Caco-2 (cell line): ENCODE measurements at regions of chr4 and their contacts with region 1.

Region 1: GRCh38 chr4:87120411-87121199 is 99.8 kb downstream of the KLHL8 start:
- DNase-seq: peak; percentile 51 to 63
- H3K4me3 ChIP-seq: no peak overlapping the region
- H3K4me3 Mint-ChIP-seq: peak overlapping the region; percentile 44
- H3K27ac Mint-ChIP-seq: peak overlapping the region; percentile 71
- H3K4me1 ChIP-seq: peaks cover 53% of the 10 kb centered on the region
- H3K4me1 Mint-ChIP-seq: peaks cover 27% of the 10 kb centered on the region
- H3K27me3 ChIP-seq: no peaks in the 10 kb centered on the region
- H3K27me3 Mint-ChIP-seq: no peaks in the 10 kb centered on the region
- CTCF ChIP-seq: no peak

Region 2: GRCh38 chr4:87108142-87108546 is 12.5 kb before region 1 on chr4:
- CTCF ChIA-PET with region 1: no interaction called
- POLR2A ChIA-PET with region 1: interaction called, 3 read pairs
- intact Hi-C with region 1: loop called (anchors 1 kb)
- DNase-seq: no peak
- H3K4me3 ChIP-seq: no peak overlapping the region
- H3K4me3 Mint-ChIP-seq: no peak overlapping the region
- H3K27ac Mint-ChIP-seq: no peak overlapping the region
- H3K4me1 ChIP-seq: peaks cover 46% of the 10 kb centered on the region
- H3K4me1 Mint-ChIP-seq: peaks cover 26% of the 10 kb centered on the region
- H3K27me3 ChIP-seq: no peaks in the 10 kb centered on the region
- H3K27me3 Mint-ChIP-seq: no peaks in the 10 kb centered on the region
- CTCF ChIP-seq: no peak

Region 3: GRCh38 chr4:87134122-87134521 is 13.5 kb after region 1 on chr4:
- CTCF ChIA-PET with region 1: no interaction called
- POLR2A ChIA-PET with region 1: no interaction called
- intact Hi-C with region 1: no loop called
- DNase-seq: no peak
- H3K4me3 ChIP-seq: no peak overlapping the region
- H3K4me3 Mint-ChIP-seq: no peak overlapping the region
- H3K27ac Mint-ChIP-seq: no peak overlapping the region
- H3K4me1 ChIP-seq: no peaks in the 10 kb centered on the region
- H3K4me1 Mint-ChIP-seq: no peaks in the 10 kb centered on the region
- H3K27me3 ChIP-seq: no peaks in the 10 kb centered on the region
- H3K27me3 Mint-ChIP-seq: no peaks in the 10 kb centered on the region
- CTCF ChIP-seq: no peak